ENCODE measurements at regions of chr11 and their contacts with region 1.

Region 1: DNA sequence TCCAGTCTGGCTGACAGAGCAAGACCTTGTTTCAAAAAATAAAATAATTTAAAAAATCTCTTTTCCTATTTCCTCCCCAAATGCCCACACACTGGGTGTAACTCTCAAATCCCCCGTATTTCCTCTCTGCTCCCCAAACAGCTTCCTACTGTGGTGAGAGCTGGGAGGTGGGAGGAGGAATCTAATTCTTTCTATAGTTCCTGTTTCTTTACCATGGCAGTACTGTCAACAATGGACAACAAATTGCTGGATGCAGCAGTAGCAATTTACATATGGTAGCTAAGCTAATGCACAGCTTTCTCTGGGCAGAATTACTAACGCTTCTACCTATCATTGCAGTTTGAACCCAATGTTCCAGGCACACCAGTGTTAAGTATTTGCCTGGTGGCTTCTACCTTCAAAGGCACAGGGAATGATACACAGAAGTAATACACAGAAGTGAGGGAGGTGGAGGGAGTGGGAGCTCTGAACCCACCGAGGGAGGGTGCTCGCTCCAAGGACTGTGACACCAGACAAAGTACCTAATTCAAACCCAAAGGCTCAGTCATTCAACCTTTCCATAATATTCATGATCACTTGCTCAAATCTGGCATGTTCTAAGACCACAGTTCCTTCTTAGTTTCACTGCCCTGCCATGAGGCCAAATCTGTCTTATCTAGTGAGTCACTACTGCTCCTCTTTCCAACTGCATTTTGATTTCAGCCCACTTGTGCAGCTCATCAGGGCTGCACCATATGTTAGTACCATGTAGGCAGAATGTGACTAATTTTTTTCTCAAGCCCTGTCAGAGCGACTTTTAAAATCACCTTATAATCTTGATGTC is 37.9 kb downstream of the CELF1 start:
- DNase-seq: no peak
- ATAC-seq: peak; percentile 41
- H3K4me3 Mint-ChIP-seq: peak overlapping the region; percentile 68
- H3K27ac Mint-ChIP-seq: peak overlapping the region; percentile 65
- H3K4me1 Mint-ChIP-seq: peaks cover 86% of the 10 kb centered on the region
- H3K27me3 Mint-ChIP-seq: no peaks in the 10 kb centered on the region
- CTCF ChIP-seq: no peak

Region 2: GRCh38 chr11:47499614-47500013 is 15.4 kb before region 1 on chr11:
- CTCF ChIA-PET with region 1: no interaction called
- POLR2A ChIA-PET with region 1: interaction called, 3 read pairs
- intact Hi-C with region 1: loop called (anchors 2 kb)
- DNase-seq: no peak
- ATAC-seq: no peak
- H3K4me3 Mint-ChIP-seq: peak overlapping the region; percentile 58
- H3K27ac Mint-ChIP-seq: peak overlapping the region; percentile 86
- H3K4me1 Mint-ChIP-seq: peaks cover 49% of the 10 kb centered on the region
- H3K27me3 Mint-ChIP-seq: no peaks in the 10 kb centered on the region
- CTCF ChIP-seq: no peak

Measured in activated B cell treated with CpG ODN at 0.5 μM for 24 hours (primary cell).